ENCODE measurements at regions of chr13 and their contacts with region 1.

Region 1: DNA sequence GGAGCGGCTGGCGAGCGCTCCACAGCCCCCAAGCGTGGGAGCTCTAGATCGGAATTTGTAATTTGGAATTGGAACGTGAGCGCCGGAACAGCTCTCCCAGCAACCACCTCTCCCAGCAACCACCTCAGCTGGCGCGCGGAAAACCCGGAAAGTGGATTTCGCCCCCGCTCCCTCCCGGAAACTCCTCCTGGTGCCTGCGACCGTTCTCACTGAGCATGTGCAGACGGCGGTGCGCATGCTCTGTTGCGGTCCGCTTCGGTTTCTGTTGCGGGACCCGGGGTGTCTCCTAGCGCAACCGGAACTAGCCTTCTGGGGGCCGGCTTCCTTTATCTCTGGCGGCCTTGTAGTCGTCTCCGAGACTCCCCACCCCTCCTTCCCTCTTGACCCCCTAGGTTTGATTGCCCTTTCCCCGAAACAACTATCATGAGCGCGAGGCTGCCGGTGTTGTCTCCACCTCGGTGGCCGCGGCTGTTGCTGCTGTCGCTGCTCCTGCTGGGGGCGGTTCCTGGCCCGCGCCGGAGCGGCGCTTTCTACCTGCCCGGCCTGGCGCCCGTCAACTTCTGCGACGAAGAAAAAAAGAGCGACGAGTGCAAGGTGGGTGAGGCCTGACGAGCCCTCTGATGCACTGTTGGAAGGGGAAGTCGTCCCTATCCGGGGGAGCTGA is at the start of gene TM9SF2:
- DNase-seq: peak; percentile 98
- ATAC-seq: peak; percentile 60
- H3K4me3 ChIP-seq: peak within 1 kb of the TSS; percentile 75 to 89 (median 87)
- H3K4me3 Mint-ChIP-seq: peak within 1 kb of the TSS; percentile 92
- H3K27ac ChIP-seq: peak within 1 kb of the TSS; percentile 89 to 90
- H3K27ac Mint-ChIP-seq: peak within 1 kb of the TSS; percentile 98
- H3K4me1 ChIP-seq: peaks cover 63 to 65% of the 10 kb centered on the region in 2 donors
- H3K4me1 Mint-ChIP-seq: peaks cover 77% of the 10 kb centered on the region
- H3K27me3 ChIP-seq: no peaks in the 10 kb centered on the region
- H3K27me3 Mint-ChIP-seq: no peaks in the 10 kb centered on the region
- CTCF ChIP-seq: no peak
- total RNA-seq, gene TM9SF2: 63.3 and 63.6 TPM in 2 replicates

Region 2: GRCh38 chr13:97975848-97976609 is 1525.3 kb before region 1 on chr13:
- CTCF ChIA-PET with region 1: no interaction called
- POLR2A ChIA-PET with region 1: no interaction called
- intact Hi-C with region 1: loop called (anchors 5 kb)
- DNase-seq: peak; percentile 93
- ATAC-seq: peak; percentile 92
- H3K4me3 ChIP-seq: peak overlapping the region; percentile 44 to 87 (median 84)
- H3K4me3 Mint-ChIP-seq: peak overlapping the region; percentile 92
- H3K27ac ChIP-seq: peak overlapping the region; percentile 61 to 92
- H3K27ac Mint-ChIP-seq: peak overlapping the region; percentile 91
- H3K4me1 ChIP-seq: peaks cover 14 to 20% of the 10 kb centered on the region in 2 donors
- H3K4me1 Mint-ChIP-seq: peaks cover 30% of the 10 kb centered on the region
- H3K27me3 ChIP-seq: no peaks in the 10 kb centered on the region
- H3K27me3 Mint-ChIP-seq: peaks cover 9% of the 10 kb centered on the region
- CTCF ChIP-seq: no peak

Region 3: DNA sequence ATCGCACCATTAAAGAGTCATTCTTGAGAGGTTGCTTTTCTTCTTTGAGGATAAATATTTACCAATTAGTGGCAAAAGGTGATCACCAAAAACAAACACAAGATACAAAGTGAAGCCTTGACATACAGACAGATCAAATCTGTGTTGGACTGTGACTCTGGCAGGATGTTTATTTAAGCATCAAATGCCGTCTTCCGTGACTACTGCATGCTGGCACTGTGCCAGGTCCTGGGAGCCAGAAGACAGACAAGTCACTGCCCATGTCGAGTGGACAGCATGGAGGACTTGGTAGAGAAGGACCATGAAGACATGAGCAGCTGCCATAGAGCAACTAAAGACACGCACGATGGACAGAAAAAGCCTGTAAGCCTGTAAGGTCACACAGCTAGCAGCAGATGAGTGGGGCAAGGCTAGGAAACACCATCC is 1451.3 kb before region 1 on chr13:
- CTCF ChIA-PET with region 1: no interaction called
- POLR2A ChIA-PET with region 1: no interaction called
- intact Hi-C with region 1: no loop called
- DNase-seq: no peak
- ATAC-seq: no peak
- H3K4me3 ChIP-seq: no peak overlapping the region
- H3K4me3 Mint-ChIP-seq: no peak overlapping the region
- H3K27ac ChIP-seq: no peak overlapping the region
- H3K27ac Mint-ChIP-seq: no peak overlapping the region
- H3K4me1 ChIP-seq: no peaks in the 10 kb centered on the region
- H3K4me1 Mint-ChIP-seq: no peaks in the 10 kb centered on the region
- H3K27me3 ChIP-seq: no peaks in the 10 kb centered on the region
- H3K27me3 Mint-ChIP-seq: peaks cover 18% of the 10 kb centered on the region
- CTCF ChIP-seq: no peak

Region 4: DNA sequence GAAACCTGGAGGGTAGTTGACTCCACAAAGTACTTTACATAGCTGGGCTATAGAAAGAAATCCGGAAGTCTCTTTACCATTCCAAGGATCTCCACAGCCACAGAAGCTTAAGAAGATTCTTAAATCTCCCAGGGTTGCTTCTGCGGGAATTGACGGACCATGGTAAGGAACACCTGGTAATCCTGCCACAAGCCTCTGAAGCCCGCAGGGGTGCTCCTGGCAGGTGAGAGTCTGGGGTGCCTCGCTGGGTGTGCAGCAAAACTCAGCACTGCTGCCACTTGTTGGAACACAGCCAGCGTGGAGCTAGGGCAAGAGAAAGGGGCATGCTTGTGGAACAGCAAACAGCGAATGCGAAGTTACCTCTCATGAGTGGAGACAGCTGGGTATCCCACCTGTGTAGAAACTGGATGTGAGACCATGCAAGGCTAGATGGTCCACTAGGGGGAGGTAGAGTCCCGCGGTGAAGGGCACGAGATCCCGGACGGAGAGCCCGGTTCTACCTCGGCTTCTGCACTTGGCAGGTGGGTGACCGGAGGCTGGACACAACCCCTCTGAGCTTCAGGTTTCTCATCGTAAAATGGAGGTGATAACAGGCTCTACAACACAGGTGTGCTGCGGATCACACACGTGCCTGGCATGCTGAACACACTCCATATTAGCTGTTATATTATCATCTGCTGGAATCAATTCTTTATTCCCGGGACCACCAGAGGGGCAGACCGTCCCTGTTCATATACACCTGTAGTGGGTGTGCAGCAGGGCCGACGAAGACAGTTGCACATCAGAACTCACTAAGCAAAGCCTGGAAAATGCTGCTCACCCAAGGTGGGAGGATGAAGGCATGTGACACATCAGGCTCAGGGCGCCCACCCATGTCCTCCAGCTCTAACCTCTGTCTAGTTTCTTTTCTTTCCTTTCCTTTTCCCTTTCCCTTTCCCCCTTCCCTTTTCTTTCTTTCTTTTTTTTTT is 324.7 kb before region 1 on chr13:
- CTCF ChIA-PET with region 1: interaction called, 11 read pairs
- POLR2A ChIA-PET with region 1: no interaction called
- intact Hi-C with region 1: loop called (anchors 5 kb)
- DNase-seq: peak; percentile 88
- ATAC-seq: peak; percentile 84
- H3K4me3 ChIP-seq: no peak overlapping the region
- H3K4me3 Mint-ChIP-seq: peak overlapping the region; percentile 58
- H3K27ac ChIP-seq: no peak overlapping the region
- H3K27ac Mint-ChIP-seq: peak overlapping the region; percentile 72
- H3K4me1 ChIP-seq: peaks cover 37 to 43% of the 10 kb centered on the region in 2 donors
- H3K4me1 Mint-ChIP-seq: peaks cover 39% of the 10 kb centered on the region
- H3K27me3 ChIP-seq: no peaks in the 10 kb centered on the region
- H3K27me3 Mint-ChIP-seq: no peaks in the 10 kb centered on the region
- CTCF ChIP-seq: peak; percentile 96

Region 5: DNA sequence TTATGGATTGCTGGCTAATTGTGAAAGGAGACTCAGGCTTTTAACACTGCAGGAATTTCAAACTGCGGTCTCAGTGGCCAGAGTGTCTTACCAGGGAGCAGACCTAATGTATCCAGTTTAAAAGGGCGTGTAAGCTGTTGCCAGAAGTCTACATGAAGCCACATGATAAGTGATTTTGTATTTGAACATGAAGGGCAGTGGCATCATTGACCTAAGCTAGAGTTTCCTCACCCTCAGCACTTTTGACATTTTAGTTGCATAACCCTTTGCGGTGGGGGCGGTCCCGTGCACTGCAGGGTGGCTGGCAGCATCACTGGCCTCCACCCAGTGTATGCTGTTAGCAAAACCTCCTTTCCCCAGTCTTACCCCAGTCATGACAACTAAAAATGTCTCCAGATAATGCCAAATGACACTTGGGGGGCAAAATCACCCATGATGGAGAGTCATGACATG is 219.5 kb before region 1 on chr13:
- CTCF ChIA-PET with region 1: interaction called, 3 read pairs
- POLR2A ChIA-PET with region 1: no interaction called
- intact Hi-C with region 1: loop called (anchors 5 kb)
- DNase-seq: no peak
- ATAC-seq: peak; percentile 82
- H3K4me3 ChIP-seq: peak overlapping the region in 3 of 5 experiments; percentile 15 to 32 (median 31)
- H3K4me3 Mint-ChIP-seq: peak overlapping the region; percentile 73
- H3K27ac ChIP-seq: peak overlapping the region; percentile 85 to 89
- H3K27ac Mint-ChIP-seq: peak overlapping the region; percentile 95
- H3K4me1 ChIP-seq: peaks cover 87 to 88% of the 10 kb centered on the region in 2 donors
- H3K4me1 Mint-ChIP-seq: peaks cover 87% of the 10 kb centered on the region
- H3K27me3 ChIP-seq: no peaks in the 10 kb centered on the region
- H3K27me3 Mint-ChIP-seq: no peaks in the 10 kb centered on the region
- CTCF ChIP-seq: no peak

Region 6: GRCh38 chr13:99516153-99516929 is 15.0 kb after region 1 on chr13:
- CTCF ChIA-PET with region 1: interaction called, 16 read pairs
- POLR2A ChIA-PET with region 1: interaction called, 6 read pairs
- intact Hi-C with region 1: no loop called
- DNase-seq: no peak
- ATAC-seq: no peak
- H3K4me3 ChIP-seq: no peak overlapping the region
- H3K4me3 Mint-ChIP-seq: no peak overlapping the region
- H3K27ac ChIP-seq: peak overlapping the region in 1 of 2 donors; percentile 35
- H3K27ac Mint-ChIP-seq: peak overlapping the region; percentile 11
- H3K4me1 ChIP-seq: peaks cover 11 to 22% of the 10 kb centered on the region in 2 donors
- H3K4me1 Mint-ChIP-seq: peaks cover 48% of the 10 kb centered on the region
- H3K27me3 ChIP-seq: no peaks in the 10 kb centered on the region
- H3K27me3 Mint-ChIP-seq: no peaks in the 10 kb centered on the region
- CTCF ChIP-seq: no peak

Region 7: GRCh38 chr13:99749271-99750019 is 248.1 kb after region 1 on chr13:
- CTCF ChIA-PET with region 1: no interaction called
- POLR2A ChIA-PET with region 1: no interaction called
- intact Hi-C with region 1: no loop called
- DNase-seq: no peak
- ATAC-seq: no peak
- H3K4me3 ChIP-seq: no peak overlapping the region
- H3K4me3 Mint-ChIP-seq: no peak overlapping the region
- H3K27ac ChIP-seq: no peak overlapping the region
- H3K27ac Mint-ChIP-seq: no peak overlapping the region
- H3K4me1 ChIP-seq: no peaks in the 10 kb centered on the region
- H3K4me1 Mint-ChIP-seq: no peaks in the 10 kb centered on the region
- H3K27me3 ChIP-seq: no peaks in the 10 kb centered on the region
- H3K27me3 Mint-ChIP-seq: no peaks in the 10 kb centered on the region
- CTCF ChIP-seq: no peak

Region 8: DNA sequence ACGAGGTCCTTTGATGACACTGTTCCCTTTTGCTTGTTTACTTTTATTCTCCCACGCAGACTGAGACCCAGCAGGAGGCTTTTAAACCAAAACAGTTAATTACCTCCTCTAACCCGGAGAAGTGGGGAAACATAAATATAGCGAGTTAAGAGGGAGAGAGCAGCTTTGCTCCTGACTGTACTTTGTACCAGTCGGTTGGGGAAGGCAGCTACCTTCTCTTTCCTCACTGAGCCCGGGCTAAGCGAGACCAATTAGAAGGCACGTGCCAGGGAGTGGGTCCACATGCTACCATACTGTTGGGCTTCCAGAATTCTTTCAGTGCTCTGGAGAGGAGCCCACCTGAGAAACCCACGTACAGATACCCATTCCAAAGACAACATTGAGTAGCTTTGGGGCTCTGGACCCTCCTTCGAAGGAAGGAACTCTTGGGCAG is 346.0 kb after region 1 on chr13:
- CTCF ChIA-PET with region 1: no interaction called
- POLR2A ChIA-PET with region 1: no interaction called
- intact Hi-C with region 1: no loop called
- DNase-seq: no peak
- ATAC-seq: no peak
- H3K4me3 ChIP-seq: no peak overlapping the region
- H3K4me3 Mint-ChIP-seq: no peak overlapping the region
- H3K27ac ChIP-seq: no peak overlapping the region
- H3K27ac Mint-ChIP-seq: no peak overlapping the region
- H3K4me1 ChIP-seq: no peaks in the 10 kb centered on the region
- H3K4me1 Mint-ChIP-seq: no peaks in the 10 kb centered on the region
- H3K27me3 ChIP-seq: no peaks in the 10 kb centered on the region
- H3K27me3 Mint-ChIP-seq: no peaks in the 10 kb centered on the region
- CTCF ChIP-seq: no peak

Region 9: GRCh38 chr13:100674848-100675660 is 1173.7 kb after region 1 on chr13:
- CTCF ChIA-PET with region 1: no interaction called
- POLR2A ChIA-PET with region 1: no interaction called
- intact Hi-C with region 1: loop called (anchors 5 kb)
- DNase-seq: peak; percentile 98
- ATAC-seq: peak; percentile 93
- H3K4me3 ChIP-seq: peak overlapping the region; percentile 55 to 84 (median 76)
- H3K4me3 Mint-ChIP-seq: peak overlapping the region; percentile 91
- H3K27ac ChIP-seq: peak overlapping the region in 1 of 2 donors; percentile 48
- H3K27ac Mint-ChIP-seq: peak overlapping the region; percentile 89
- H3K4me1 ChIP-seq: peaks cover 13 to 19% of the 10 kb centered on the region in 2 donors
- H3K4me1 Mint-ChIP-seq: peaks cover 13% of the 10 kb centered on the region
- H3K27me3 ChIP-seq: no peaks in the 10 kb centered on the region
- H3K27me3 Mint-ChIP-seq: peaks cover 9% of the 10 kb centered on the region
- CTCF ChIP-seq: peak; percentile 25

Measured in B cell (primary cell).